Ovary (tissue), 10 donors: ENCODE measurements at regions of chr4 and their contacts with region 1.

Region 1: DNA sequence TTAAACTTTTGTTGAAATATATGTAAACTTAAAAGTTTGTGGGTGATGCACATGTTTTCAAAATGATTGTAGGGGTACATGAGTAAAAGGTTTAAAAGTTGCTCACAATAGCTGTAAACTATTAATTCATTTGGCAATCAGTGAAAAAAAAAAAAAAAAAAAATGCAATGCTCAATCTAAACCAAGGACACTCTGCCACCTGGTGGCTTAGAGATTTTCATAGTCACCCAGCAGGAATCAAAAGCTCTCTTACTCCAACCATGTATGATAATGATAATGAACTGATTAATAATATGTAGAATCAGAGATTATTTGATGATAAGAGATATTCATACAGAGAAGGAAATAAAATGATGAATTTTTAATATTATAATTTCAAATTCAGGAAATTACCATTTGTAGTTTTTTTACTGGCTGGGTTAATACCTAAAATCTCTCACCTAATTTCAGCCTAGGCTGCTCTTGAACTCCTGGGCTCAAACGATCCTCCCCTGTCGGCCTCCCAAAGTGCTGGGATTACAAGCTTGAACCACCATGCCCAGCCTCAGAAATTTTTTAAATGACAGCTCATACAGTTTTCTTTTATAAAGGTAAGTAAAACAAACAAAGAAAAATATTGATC is 46.9 kb upstream of the SLC25A4 start:
- DNase-seq: peak in 3 of 5 donors; percentile 24 to 60 (median 31)
- H3K4me3 ChIP-seq: no peak overlapping the region
- H3K27ac ChIP-seq: no peak overlapping the region
- H3K4me1 ChIP-seq: no peaks in the 10 kb centered on the region
- H3K27me3 ChIP-seq: no peaks in the 10 kb centered on the region
- CTCF ChIP-seq: peak in 2 of 3 donors; percentile 21 to 57
- EP300 ChIP-seq: no peak
- POLR2A ChIP-seq: no peak

Region 2: DNA sequence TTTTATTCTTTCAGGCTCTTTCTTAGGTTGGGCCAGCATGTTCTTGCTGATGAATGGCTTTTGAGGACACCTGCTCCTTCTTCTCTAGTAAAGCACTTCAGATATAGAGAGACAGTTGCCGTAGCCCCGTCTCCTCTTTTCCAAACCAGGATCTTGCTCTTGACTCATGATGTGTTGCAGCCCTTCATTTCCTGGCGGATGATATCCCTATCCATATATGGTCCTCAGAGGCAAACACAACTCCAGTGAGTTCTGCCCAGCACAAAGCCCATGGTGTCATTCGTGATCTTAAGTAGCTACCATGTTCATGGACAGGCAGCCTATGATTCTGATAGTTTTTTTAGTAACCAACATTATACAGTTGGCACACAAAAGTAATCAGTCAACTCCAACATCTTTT is 210.5 kb before region 1 on chr4:
- intact Hi-C with region 1: no loop called
- DNase-seq: no peak
- H3K4me3 ChIP-seq: no peak overlapping the region
- H3K27ac ChIP-seq: no peak overlapping the region
- H3K4me1 ChIP-seq: no peaks in the 10 kb centered on the region
- H3K27me3 ChIP-seq: no peaks in the 10 kb centered on the region
- CTCF ChIP-seq: no peak
- EP300 ChIP-seq: no peak
- POLR2A ChIP-seq: no peak

Region 3: DNA sequence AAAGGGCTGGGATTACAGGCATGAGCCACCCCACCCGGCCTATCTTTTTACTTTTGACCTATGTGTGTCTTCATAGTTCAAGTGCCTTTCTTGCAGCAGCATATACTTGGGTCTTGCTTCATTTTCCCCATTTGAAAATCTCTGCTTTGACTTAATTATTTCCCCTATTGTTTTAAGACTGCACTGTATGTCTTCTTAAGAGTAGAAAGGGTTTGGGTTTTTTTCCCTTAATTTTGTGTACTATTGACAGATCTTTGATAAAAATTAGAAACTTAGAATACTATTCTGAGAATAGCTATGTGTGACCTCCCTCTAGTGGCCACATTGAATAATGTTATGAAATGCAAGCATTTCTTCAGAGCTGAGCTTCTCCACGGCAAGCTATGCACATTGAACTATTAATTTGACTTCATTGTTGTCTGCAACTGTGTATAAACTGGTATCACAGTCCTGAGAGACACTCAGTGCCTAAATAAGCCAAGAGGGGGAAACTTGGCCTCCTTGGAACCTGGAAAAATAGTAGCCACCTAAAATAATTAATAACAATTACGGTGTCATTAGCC is 38.2 kb after region 1 on chr4:
- intact Hi-C with region 1: loop called in 1 of 4 experiments (anchors 5 kb)
- DNase-seq: no peak
- H3K4me3 ChIP-seq: no peak overlapping the region
- H3K27ac ChIP-seq: no peak overlapping the region
- H3K4me1 ChIP-seq: peaks cover 4% of the 10 kb centered on the region
- H3K27me3 ChIP-seq: no peaks in the 10 kb centered on the region
- CTCF ChIP-seq: peak; percentile 75 to 86 (median 80)
- EP300 ChIP-seq: no peak
- POLR2A ChIP-seq: no peak